Ascending aorta (tissue), 2 donors: ENCODE measurements at regions of chr3 and their contacts with region 1.

Region 1: DNA sequence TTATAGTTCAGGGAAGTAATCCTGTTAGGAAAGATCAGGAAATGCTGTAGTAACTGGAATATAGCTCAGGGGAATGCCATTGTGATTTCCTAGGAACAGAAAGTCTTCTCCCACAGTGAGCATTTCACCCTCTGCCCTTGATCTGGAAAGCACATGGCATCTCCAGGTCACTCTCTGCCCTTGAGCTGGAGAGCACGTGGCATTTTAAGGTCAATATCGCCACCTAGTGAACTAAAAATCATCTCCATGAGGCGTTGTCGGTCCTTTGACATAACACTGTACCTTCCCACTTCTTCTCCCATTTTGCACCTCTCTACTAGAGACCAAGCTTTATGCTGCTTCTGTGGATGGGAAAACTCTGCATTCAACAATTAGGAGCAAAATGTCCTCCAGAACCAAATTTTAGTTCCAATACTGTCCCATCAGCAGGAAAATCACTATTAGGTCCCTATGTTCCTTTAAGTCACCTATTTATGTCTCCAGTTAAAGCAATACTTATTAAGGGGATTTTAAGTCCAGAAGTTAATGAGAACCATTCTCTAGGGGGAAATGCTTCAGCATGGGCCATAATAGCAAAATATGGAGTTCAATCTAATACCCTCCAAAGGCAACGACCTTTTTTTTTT is 54.7 kb upstream of the GK5 start:
- DNase-seq: peak in 1 of 2 donors; percentile 71
- H3K4me3 ChIP-seq: no peak overlapping the region
- H3K27ac ChIP-seq: no peak overlapping the region
- H3K4me1 ChIP-seq: peaks cover 5 to 23% of the 10 kb centered on the region in 2 donors
- H3K27me3 ChIP-seq: no peaks in the 10 kb centered on the region
- CTCF ChIP-seq: peak; percentile 50 to 70 (median 63)

Region 2: DNA sequence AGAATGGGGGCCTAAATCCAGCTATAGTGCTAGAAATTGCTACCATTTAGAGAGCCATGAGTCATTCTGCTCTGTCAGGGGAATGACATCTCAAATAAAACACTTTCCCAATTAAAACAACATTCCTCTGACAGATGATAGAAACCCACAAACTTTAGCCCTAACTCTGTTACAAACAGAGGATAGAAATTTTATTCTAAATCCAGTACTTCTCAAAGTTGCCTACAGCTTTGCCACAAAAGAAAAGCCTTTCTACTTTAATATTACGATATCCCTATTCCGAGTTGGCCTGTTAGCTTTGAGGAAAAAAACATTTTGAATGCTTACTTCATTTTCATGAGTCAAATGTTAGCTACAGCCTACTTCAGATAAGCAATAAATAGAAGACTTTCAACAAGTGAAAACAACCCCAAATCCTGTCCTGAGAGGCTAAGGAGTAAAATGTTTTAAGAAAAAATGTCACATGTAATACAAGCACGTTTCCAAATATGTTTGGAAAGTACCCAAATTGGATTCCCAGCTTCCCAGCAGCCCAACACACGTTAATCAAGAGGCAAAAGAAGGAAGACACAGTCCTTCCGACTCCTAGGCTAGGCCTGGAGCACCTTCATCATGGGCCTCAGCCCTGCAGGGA is 320.0 kb before region 1 on chr3:
- intact Hi-C with region 1: loop called (anchors 5 kb)
- DNase-seq: no peak
- H3K4me3 ChIP-seq: no peak overlapping the region
- H3K27ac ChIP-seq: peak overlapping the region; percentile 76
- H3K4me1 ChIP-seq: peaks cover 0 to 11% of the 10 kb centered on the region in 2 donors
- H3K27me3 ChIP-seq: no peaks in the 10 kb centered on the region
- CTCF ChIP-seq: no peak

Region 3: DNA sequence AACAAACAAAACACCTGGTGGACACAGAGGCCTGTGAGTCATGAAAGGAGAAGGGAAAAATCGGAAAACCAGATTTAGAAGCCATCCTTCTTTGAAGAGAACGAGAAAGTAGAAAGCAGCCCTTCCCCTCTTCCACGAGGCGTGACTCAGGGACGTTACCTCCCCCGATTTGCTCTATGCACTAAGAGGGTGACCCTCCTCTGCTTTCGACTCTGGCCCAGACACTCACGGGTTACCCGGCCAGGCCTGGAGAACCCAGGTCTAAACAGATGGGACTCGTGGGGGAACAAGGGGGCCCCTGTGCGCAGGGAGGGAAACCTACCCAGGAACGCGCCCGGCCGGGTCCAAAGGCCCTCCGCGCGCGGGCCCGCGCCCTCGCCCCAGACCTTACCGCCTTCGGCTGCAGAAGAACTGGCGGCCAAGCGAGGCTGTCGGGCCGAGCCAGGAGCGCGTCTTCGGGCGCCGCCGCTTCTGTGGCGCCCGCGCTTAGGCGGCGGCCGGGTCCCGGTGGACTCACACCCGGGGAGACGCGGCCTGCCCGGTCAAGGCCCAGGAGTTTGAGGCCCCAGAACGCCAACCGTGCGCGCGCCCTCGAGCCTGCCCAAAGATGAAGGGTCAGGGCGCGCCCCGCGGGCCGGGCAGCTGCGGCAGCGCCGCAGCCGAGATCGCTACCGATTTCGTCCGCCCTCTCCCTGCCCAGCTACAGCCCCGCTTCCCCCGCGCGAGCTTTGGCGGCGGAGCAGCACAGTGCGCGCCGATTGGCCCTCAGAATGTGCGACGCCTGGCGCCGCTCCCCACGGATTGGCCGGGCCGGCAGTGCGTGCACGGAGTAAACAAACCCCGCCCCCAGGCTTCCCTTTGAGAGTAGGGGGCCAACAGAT is 131.0 kb before region 1 on chr3 and contains the start of gene TFDP2:
- intact Hi-C with region 1: loop called (anchors 1 kb)
- DNase-seq: peak; percentile 52 to 94
- H3K4me3 ChIP-seq: peak within 1 kb of the TSS; percentile 76 to 90
- H3K27ac ChIP-seq: peak within 1 kb of the TSS; percentile 86 to 94
- H3K4me1 ChIP-seq: peaks cover 0 to 10% of the 10 kb centered on the region in 2 donors
- H3K27me3 ChIP-seq: no peaks in the 10 kb centered on the region
- CTCF ChIP-seq: no peak
- total RNA-seq, gene TFDP2: 23.0 TPM

Region 4: DNA sequence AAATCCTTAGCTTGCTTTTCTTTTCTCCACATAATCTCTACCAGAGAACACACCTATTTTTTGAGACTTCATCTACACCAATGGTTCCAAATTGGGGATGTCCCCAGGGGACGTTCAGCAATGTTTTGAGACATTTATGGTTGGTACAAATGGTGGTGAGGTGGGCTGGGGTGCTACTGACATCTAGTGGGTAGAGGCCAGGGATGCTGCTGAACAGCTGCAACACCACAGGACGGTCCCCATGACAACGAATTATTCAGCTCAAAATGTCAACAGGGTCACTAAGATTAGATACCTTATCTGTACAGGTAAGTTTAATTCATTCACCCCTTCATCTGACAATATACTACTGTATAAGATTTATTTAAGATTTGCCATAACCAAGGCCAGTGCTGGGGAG is 69.0 kb before region 1 on chr3:
- intact Hi-C with region 1: loop called (anchors 2 kb)
- DNase-seq: no peak
- H3K4me3 ChIP-seq: no peak overlapping the region
- H3K27ac ChIP-seq: peak overlapping the region; percentile 71 to 72
- H3K4me1 ChIP-seq: peaks cover 0 to 45% of the 10 kb centered on the region in 2 donors
- H3K27me3 ChIP-seq: no peaks in the 10 kb centered on the region
- CTCF ChIP-seq: no peak

Region 5: GRCh38 chr3:142263118-142263517 is 17.0 kb before region 1 on chr3:
- intact Hi-C with region 1: no loop called
- DNase-seq: no peak
- H3K4me3 ChIP-seq: no peak overlapping the region
- H3K27ac ChIP-seq: no peak overlapping the region
- H3K4me1 ChIP-seq: no peaks in the 10 kb centered on the region
- H3K27me3 ChIP-seq: no peaks in the 10 kb centered on the region
- CTCF ChIP-seq: no peak